Activated T-helper 1 cell treated with anti-CD3 and anti-CD28 coated beads, Interleukin-12 subunit alpha, Interleukin-12 subunit beta, Interleukin-2, Interleukin-4 antibody, amounts not matched to agents 30 ng/mL and 10 ng/mL and 1 ng/mL, durations not matched to agents 14 hours and 24 hours and 36 hours (primary cell): ENCODE measurements at regions of chr17 and their contacts with region 1.

Region 1: GRCh38 chr17:6666077-6666521 is 14.5 kb downstream of the C17orf100 start:
- DNase-seq: no peak
- H3K4me3 Mint-ChIP-seq: no peak overlapping the region
- H3K27ac Mint-ChIP-seq: no peak overlapping the region
- H3K4me1 Mint-ChIP-seq: peaks cover 13% of the 10 kb centered on the region
- H3K27me3 Mint-ChIP-seq: peaks cover 13% of the 10 kb centered on the region

Region 2: DNA sequence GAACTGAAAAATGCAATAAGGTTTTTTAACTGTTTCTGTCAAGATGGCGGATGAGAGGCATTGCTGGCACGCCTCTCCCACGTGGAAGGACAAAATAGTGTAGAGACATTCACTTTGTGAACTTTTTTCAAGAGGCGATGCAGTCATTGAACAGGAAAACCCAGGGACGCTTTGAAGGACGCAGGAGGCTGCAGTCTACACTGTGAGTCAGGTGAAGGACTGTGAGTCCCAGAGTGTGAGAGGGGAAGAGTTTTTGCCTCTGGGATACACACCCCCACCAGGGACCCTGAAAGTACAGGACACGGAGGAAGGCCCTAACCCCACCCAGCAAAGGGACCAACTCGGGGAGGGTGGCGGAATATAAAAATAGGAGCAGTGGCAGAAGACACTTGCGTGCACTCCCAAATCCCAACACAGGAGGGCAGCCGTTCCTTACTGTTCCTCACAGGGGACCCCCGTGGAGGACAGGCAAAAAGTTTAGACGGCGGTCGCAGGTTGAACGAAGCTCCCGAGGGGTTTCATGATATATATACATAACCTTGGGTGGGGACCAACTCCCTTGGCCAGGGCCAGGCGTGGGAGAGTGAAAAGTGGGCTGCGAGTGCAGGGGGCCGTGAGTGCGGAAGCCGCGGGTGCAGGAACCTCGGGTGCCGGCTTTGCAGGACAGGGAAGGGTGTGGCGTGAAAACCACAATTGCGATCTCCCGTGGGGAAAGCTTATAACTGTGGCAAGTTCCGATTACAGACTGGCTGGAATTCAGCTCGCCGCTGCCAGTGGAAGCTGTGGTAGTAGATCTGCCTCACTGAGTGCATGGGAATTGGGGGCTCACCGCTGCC is 247.7 kb after region 1 on chr17:
- intact Hi-C with region 1: loop called (anchors 1 kb)
- DNase-seq: peak; percentile 48
- H3K4me3 Mint-ChIP-seq: peak overlapping the region; percentile 76
- H3K27ac Mint-ChIP-seq: no peak overlapping the region
- H3K4me1 Mint-ChIP-seq: peaks cover 33% of the 10 kb centered on the region
- H3K27me3 Mint-ChIP-seq: peaks cover 18% of the 10 kb centered on the region